CD14-positive monocyte (primary cell): ENCODE measurements at regions of chr6 and their contacts with region 1.

Region 1: GRCh38 chr6:149910721-149911151 is 12.2 kb downstream of the RAET1G start:
- DNase-seq: no peak
- H3K4me3 ChIP-seq: no peak overlapping the region
- H3K4me3 Mint-ChIP-seq: no peak overlapping the region
- H3K27ac ChIP-seq: no peak overlapping the region
- H3K27ac Mint-ChIP-seq: no peak overlapping the region
- H3K4me1 ChIP-seq: no peaks in the 10 kb centered on the region
- H3K4me1 Mint-ChIP-seq: no peaks in the 10 kb centered on the region
- H3K27me3 ChIP-seq: no peaks in the 10 kb centered on the region
- H3K27me3 Mint-ChIP-seq: peaks cover 7 to 18% (median 14%) of the 10 kb centered on the region in 3 donors
- CTCF ChIP-seq: no peak

Region 2: GRCh38 chr6:149628875-149629510 is 281.7 kb before region 1 on chr6:
- intact Hi-C with region 1: loop called in 1 of 2 experiments (anchors 5 kb)
- DNase-seq: peak; percentile 23 to 63 (median 51)
- H3K4me3 ChIP-seq: peak overlapping the region in 2 of 3 experiments; percentile 28 to 61
- H3K4me3 Mint-ChIP-seq: peak overlapping the region; percentile 59 to 76
- H3K27ac ChIP-seq: peak overlapping the region; percentile 22 to 92
- H3K27ac Mint-ChIP-seq: peak overlapping the region; percentile 87 to 97 (median 90)
- H3K4me1 ChIP-seq: peaks cover 12 to 21% of the 10 kb centered on the region in 2 donors
- H3K4me1 Mint-ChIP-seq: peaks cover 17% of the 10 kb centered on the region
- H3K27me3 ChIP-seq: no peaks in the 10 kb centered on the region
- H3K27me3 Mint-ChIP-seq: peaks cover 0 to 1% (median 0%) of the 10 kb centered on the region in 3 donors
- CTCF ChIP-seq: no peak

Region 3: GRCh38 chr6:150142670-150143515 is 232.2 kb after region 1 on chr6 and contains the start of gene PPP1R14C:
- intact Hi-C with region 1: no loop called
- DNase-seq: no peak
- H3K4me3 ChIP-seq: peak within 1 kb of the TSS; percentile 29 to 73 (median 35)
- H3K4me3 Mint-ChIP-seq: peak within 1 kb of the TSS; percentile 74 to 89
- H3K27ac ChIP-seq: no peak within 1 kb of the TSS
- H3K27ac Mint-ChIP-seq: peak within 1 kb of the TSS in 1 of 7 donors; percentile 21
- H3K4me1 ChIP-seq: peaks cover 49 to 57% of the 10 kb centered on the region in 2 donors
- H3K4me1 Mint-ChIP-seq: peaks cover 43% of the 10 kb centered on the region
- H3K27me3 ChIP-seq: peaks cover 35 to 55% of the 10 kb centered on the region in 2 donors
- H3K27me3 Mint-ChIP-seq: peaks cover 40 to 66% (median 49%) of the 10 kb centered on the region in 3 donors
- CTCF ChIP-seq: no peak
- polyA plus RNA-seq, gene PPP1R14C: 0.11 TPM in 1 of 3 donors, not detected in the others